ENCODE measurements at regions of chr4 and their contacts with region 1.

Region 1: GRCh38 chr4:7478665-7479064 is 43.9 kb upstream of the PSAPL1 start:
- DNase-seq: no peak
- ATAC-seq: no peak
- H3K4me3 ChIP-seq: no peak overlapping the region
- H3K4me3 Mint-ChIP-seq: no peak overlapping the region
- H3K27ac ChIP-seq: no peak overlapping the region
- H3K27ac Mint-ChIP-seq: no peak overlapping the region
- H3K4me1 ChIP-seq: no peaks in the 10 kb centered on the region
- H3K4me1 Mint-ChIP-seq: no peaks in the 10 kb centered on the region
- H3K27me3 ChIP-seq: no peaks in the 10 kb centered on the region
- H3K27me3 Mint-ChIP-seq: no peaks in the 10 kb centered on the region
- CTCF ChIP-seq: no peak

Region 2: GRCh38 chr4:6499238-6499600 is 979.4 kb before region 1 on chr4:
- CTCF ChIA-PET with region 1: no interaction called
- POLR2A ChIA-PET with region 1: no interaction called
- intact Hi-C with region 1: loop called in 1 of 2 experiments (anchors 5 kb)
- DNase-seq: no peak
- ATAC-seq: no peak
- H3K4me3 ChIP-seq: no peak overlapping the region
- H3K4me3 Mint-ChIP-seq: no peak overlapping the region
- H3K27ac ChIP-seq: no peak overlapping the region
- H3K27ac Mint-ChIP-seq: no peak overlapping the region
- H3K4me1 ChIP-seq: no peaks in the 10 kb centered on the region
- H3K4me1 Mint-ChIP-seq: no peaks in the 10 kb centered on the region
- H3K27me3 ChIP-seq: peaks cover 0 to under 1% of the 10 kb centered on the region in 2 experiments
- H3K27me3 Mint-ChIP-seq: peaks cover 38% of the 10 kb centered on the region
- CTCF ChIP-seq: no peak

Region 3: GRCh38 chr4:7186061-7186461 is 292.6 kb before region 1 on chr4:
- CTCF ChIA-PET with region 1: no interaction called
- POLR2A ChIA-PET with region 1: no interaction called
- intact Hi-C with region 1: no loop called
- DNase-seq: no peak
- ATAC-seq: no peak
- H3K4me3 ChIP-seq: no peak overlapping the region
- H3K4me3 Mint-ChIP-seq: no peak overlapping the region
- H3K27ac ChIP-seq: no peak overlapping the region
- H3K27ac Mint-ChIP-seq: no peak overlapping the region
- H3K4me1 ChIP-seq: no peaks in the 10 kb centered on the region
- H3K4me1 Mint-ChIP-seq: peaks cover 2% of the 10 kb centered on the region
- H3K27me3 ChIP-seq: no peaks in the 10 kb centered on the region
- H3K27me3 Mint-ChIP-seq: peaks cover 29% of the 10 kb centered on the region
- CTCF ChIP-seq: no peak

Measured in CD8-positive, alpha-beta T cell (primary cell).